HepG2 (cell line): ENCODE measurements at regions of chr1 and their contacts with region 1.

Region 1: GRCh38 chr1:150561974-150562445 is 12.8 kb downstream of the ADAMTSL4 start:
- DNase-seq: peak; percentile 77
- ATAC-seq: peak; percentile 72
- H3K4me3 ChIP-seq: peak overlapping the region; percentile 72 to 80 (median 73)
- H3K27ac ChIP-seq: peak overlapping the region; percentile 91
- H3K4me1 ChIP-seq: peaks cover 51% of the 10 kb centered on the region
- H3K27me3 ChIP-seq: no peaks in the 10 kb centered on the region
- CTCF ChIP-seq: no peak
- EP300 ChIP-seq: peak in 1 of 2 experiments; percentile 96; a peak in 2 of 4 replicates
- POLR2A ChIP-seq: peak; percentile 46 to 65; a peak in 2 of 4 replicates
- RAD21 ChIP-seq: 0 out of 2 replicates have a peak, but pooled peaks have one; percentile 4

Region 2: GRCh38 chr1:150529017-150529416 is 33.0 kb before region 1 on chr1:
- CTCF ChIA-PET with region 1: no interaction called
- POLR2A ChIA-PET with region 1: interaction called, 29 read pairs
- in situ Hi-C with region 1: no loop called
- intact Hi-C with region 1: no loop called
- DNase-seq: no peak
- ATAC-seq: no peak
- H3K4me3 ChIP-seq: peak overlapping the region in 2 of 3 experiments; percentile 3 to 21; a peak in 1 of 6 replicates
- H3K27ac ChIP-seq: no peak overlapping the region
- H3K4me1 ChIP-seq: peaks cover 52% of the 10 kb centered on the region
- H3K27me3 ChIP-seq: no peaks in the 10 kb centered on the region
- CTCF ChIP-seq: no peak
- EP300 ChIP-seq: no peak
- POLR2A ChIP-seq: no peak
- RAD21 ChIP-seq: no peak

Region 3: GRCh38 chr1:150548632-150549495 is 13.1 kb before region 1 on chr1 and contains the start of gene ADAMTSL4:
- CTCF ChIA-PET with region 1: no interaction called
- POLR2A ChIA-PET with region 1: interaction called, 88 read pairs
- in situ Hi-C with region 1: no loop called
- intact Hi-C with region 1: no loop called
- DNase-seq: no peak
- ATAC-seq: peak; percentile 67
- H3K4me3 ChIP-seq: peak within 1 kb of the TSS; percentile 62 to 83 (median 63)
- H3K27ac ChIP-seq: peak within 1 kb of the TSS; percentile 57
- H3K4me1 ChIP-seq: peaks cover 61% of the 10 kb centered on the region
- H3K27me3 ChIP-seq: no peaks in the 10 kb centered on the region; a peak in 1 of 5 replicates
- CTCF ChIP-seq: peak; percentile 30; the same call in 1 of the 2 replicates
- EP300 ChIP-seq: no peak
- POLR2A ChIP-seq: peak in 1 of 2 experiments; percentile 45; a peak in 1 of 4 replicates
- RAD21 ChIP-seq: 0 out of 2 replicates have a peak, but pooled peaks have one; percentile 37
- total RNA-seq, gene ADAMTSL4: 1.9 and 3.9 TPM in 2 replicates

Region 4: DNA sequence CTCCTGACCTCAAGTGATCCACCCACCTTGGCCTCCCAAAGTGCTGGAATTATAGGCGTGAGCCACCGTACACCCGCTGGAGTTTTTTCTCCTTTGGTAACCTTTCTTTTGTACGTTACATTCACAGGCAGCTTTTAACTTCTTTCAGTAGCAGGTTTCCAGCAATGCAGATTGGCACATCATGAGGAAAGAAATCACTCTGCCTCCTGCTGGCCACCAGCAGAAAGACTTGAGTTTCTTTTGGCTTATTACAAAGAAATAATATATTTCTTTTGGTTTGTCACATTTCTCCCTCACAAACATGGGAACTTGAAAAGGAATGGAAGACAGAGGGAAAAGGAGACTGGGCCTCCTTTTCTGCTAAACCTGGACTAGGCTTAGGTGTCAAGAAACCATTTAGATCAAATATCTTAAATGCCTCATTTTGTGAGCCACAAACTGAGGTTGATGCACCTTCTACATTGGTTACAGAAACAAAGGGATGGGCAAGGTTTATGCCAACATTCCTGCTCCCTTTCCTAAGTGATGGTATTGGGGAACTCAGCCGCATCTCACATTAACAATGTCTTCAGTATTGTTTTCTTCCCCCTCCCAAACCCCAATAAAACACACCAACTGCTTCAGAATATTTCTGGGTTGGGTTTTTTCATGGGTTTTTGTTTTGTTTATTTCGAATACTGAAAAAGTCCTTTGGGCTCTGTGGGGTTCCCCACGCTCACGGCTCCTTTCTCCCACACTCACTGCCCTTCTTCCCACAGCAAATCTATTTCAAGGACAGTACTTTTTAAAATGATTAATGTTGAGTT is 59.7 kb after region 1 on chr1:
- CTCF ChIA-PET with region 1: interaction called, 15 read pairs
- POLR2A ChIA-PET with region 1: interaction called, 62 read pairs
- in situ Hi-C with region 1: loop called (anchors 5 kb)
- intact Hi-C with region 1: loop called (anchors 1 kb)
- DNase-seq: peak; percentile 48
- ATAC-seq: no peak
- H3K4me3 ChIP-seq: no peak overlapping the region
- H3K27ac ChIP-seq: no peak overlapping the region
- H3K4me1 ChIP-seq: peaks cover 38% of the 10 kb centered on the region
- H3K27me3 ChIP-seq: no peaks in the 10 kb centered on the region
- CTCF ChIP-seq: peak; percentile 68
- EP300 ChIP-seq: no peak
- POLR2A ChIP-seq: no peak
- RAD21 ChIP-seq: peak; percentile 65

Region 5: GRCh38 chr1:150696590-150697524 is 134.8 kb after region 1 on chr1 and contains the start of gene GOLPH3L:
- CTCF ChIA-PET with region 1: no interaction called
- POLR2A ChIA-PET with region 1: interaction called, 9 read pairs
- in situ Hi-C with region 1: no loop called
- intact Hi-C with region 1: loop called (anchors 5 kb)
- DNase-seq: peak; percentile 99
- ATAC-seq: peak; percentile 100
- H3K4me3 ChIP-seq: peak within 1 kb of the TSS; percentile 73 to 99 (median 83)
- H3K27ac ChIP-seq: peak within 1 kb of the TSS; percentile 73
- H3K4me1 ChIP-seq: 0 out of 2 replicates have a peak, but pooled peaks cover 17% of the 10 kb centered on the region
- H3K27me3 ChIP-seq: no peaks in the 10 kb centered on the region; a peak in 2 of 5 replicates
- CTCF ChIP-seq: no peak
- EP300 ChIP-seq: no peak
- POLR2A ChIP-seq: peak; percentile 72 to 73
- RAD21 ChIP-seq: no peak
- total RNA-seq, gene GOLPH3L: 12.8 and 19.3 TPM in 2 replicates

Region 6: DNA sequence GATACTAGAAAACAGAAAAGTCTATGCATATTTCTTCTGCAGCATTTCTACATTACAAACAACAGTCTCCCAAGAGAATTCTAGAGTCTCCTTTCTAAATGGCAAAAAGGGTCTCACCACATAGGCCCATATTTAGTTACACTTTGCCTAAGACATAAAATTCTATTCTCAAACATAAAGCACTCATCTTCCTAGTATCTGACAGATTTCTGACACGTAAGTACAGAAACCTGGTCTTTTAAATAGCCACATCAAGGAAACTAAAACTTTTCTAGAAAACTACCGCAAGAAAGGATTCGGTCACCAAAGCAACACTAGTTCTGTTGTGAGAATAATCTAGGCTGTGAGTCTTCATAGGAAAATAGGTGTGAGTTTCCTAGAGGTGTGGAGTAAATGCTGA is 279.6 kb after region 1 on chr1:
- CTCF ChIA-PET with region 1: no interaction called
- POLR2A ChIA-PET with region 1: no interaction called
- in situ Hi-C with region 1: no loop called
- intact Hi-C with region 1: no loop called
- DNase-seq: no peak
- ATAC-seq: no peak
- H3K4me3 ChIP-seq: no peak overlapping the region
- H3K27ac ChIP-seq: no peak overlapping the region
- H3K4me1 ChIP-seq: peaks cover 4% of the 10 kb centered on the region; the same call in 1 of the 2 replicates
- H3K27me3 ChIP-seq: no peaks in the 10 kb centered on the region
- CTCF ChIP-seq: no peak
- EP300 ChIP-seq: no peak
- POLR2A ChIP-seq: no peak
- RAD21 ChIP-seq: no peak